ENCODE measurements at regions of chr12 and their contacts with region 1.

Region 1: DNA sequence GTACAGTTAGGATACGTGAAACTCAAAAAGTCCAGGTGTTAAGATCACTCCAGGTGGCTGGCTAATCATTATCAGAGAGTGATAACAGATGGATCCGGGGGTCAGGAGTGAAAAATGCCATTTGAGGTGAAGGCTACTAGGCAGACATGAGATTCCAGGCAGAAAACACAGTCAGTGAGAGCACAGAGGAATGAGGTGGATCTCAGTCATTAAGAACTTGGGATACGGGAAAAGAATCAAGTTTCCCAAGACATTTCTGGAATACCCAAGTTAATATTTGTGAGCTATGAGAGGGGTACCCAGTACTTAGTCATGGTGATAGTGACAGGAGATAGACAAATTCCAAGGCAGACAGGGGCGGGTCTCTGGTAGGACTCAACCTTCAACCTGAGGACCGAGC is 94.6 kb upstream of the ALG10B start:
- DNase-seq: peak; percentile 30 to 49
- H3K4me3 ChIP-seq: no peak overlapping the region
- H3K4me3 Mint-ChIP-seq: peak overlapping the region; percentile 33
- H3K27ac Mint-ChIP-seq: peak overlapping the region; percentile 30
- H3K4me1 ChIP-seq: peaks cover 11% of the 10 kb centered on the region
- H3K4me1 Mint-ChIP-seq: peaks cover 10% of the 10 kb centered on the region
- H3K27me3 ChIP-seq: no peaks in the 10 kb centered on the region
- H3K27me3 Mint-ChIP-seq: no peaks in the 10 kb centered on the region
- CTCF ChIP-seq: no peak

Region 2: DNA sequence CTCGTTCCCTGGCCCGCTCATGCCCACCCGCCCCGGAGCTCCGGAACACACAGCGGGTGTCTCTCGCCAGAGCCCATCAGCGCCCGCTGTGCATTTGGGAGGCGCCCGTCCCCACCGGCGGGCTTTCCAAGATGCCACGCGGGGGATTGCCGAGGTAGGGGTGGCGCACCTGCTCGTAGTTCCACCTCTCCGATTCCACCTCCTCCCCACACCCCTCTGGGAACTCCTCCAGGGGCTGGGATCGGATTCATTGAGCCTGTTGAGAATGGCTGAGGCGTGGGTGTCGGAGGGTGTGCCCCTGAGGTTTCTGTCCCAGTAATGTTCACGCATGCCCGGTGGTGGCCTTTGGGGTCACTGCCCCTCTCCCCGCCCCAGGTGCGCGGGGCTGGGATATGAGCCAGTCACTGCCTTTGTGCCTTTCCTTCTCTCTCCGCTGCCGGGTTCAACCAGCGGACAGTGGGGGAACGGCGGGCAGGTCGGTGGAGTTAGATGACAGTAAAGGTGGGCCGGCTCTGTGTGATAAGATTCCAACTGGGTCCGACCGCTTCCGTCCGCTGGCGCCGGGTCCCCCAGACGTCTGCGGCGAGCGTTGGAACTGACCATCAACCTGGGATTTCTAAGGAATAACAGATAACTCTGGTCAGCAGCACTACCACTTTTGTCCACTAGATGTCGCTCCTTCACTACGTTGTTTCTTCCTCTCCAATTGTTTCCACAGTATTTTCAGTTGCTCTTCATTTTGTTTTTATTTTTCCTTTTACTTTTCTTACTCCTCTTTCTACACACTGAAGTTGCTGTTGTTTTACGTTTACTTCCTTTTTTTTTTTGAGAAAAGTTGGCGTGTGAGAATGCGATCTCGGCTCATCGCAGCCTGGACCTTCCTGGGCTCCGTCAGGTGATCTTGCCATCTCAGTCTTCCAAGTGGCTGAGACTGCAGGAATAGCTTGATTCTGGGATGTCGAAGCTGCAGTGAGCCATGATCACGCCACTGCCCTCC is 83.5 kb before region 1 on chr12:
- CTCF ChIA-PET with region 1: no interaction called
- POLR2A ChIA-PET with region 1: no interaction called
- intact Hi-C with region 1: loop called (anchors 2 kb)
- DNase-seq: peak; percentile 75 to 82
- H3K4me3 ChIP-seq: peak overlapping the region; percentile 28
- H3K4me3 Mint-ChIP-seq: peak overlapping the region; percentile 72
- H3K27ac Mint-ChIP-seq: no peak overlapping the region
- H3K4me1 ChIP-seq: peaks cover 4% of the 10 kb centered on the region; the same call in 1 of the 2 replicates
- H3K4me1 Mint-ChIP-seq: no peaks in the 10 kb centered on the region
- H3K27me3 ChIP-seq: no peaks in the 10 kb centered on the region
- H3K27me3 Mint-ChIP-seq: peaks cover 3% of the 10 kb centered on the region
- CTCF ChIP-seq: peak; percentile 91 to 94

Region 3: GRCh38 chr12:38175538-38175937 is 46.5 kb before region 1 on chr12:
- CTCF ChIA-PET with region 1: no interaction called
- POLR2A ChIA-PET with region 1: no interaction called
- intact Hi-C with region 1: loop called (anchors 5 kb)
- DNase-seq: no peak
- H3K4me3 ChIP-seq: no peak overlapping the region
- H3K4me3 Mint-ChIP-seq: no peak overlapping the region
- H3K27ac Mint-ChIP-seq: no peak overlapping the region
- H3K4me1 ChIP-seq: no peaks in the 10 kb centered on the region
- H3K4me1 Mint-ChIP-seq: no peaks in the 10 kb centered on the region
- H3K27me3 ChIP-seq: no peaks in the 10 kb centered on the region
- H3K27me3 Mint-ChIP-seq: no peaks in the 10 kb centered on the region
- CTCF ChIP-seq: no peak